Left colon (tissue), 2 donors: ENCODE measurements at regions of chr1 and their contacts with region 1.

Region 1: DNA sequence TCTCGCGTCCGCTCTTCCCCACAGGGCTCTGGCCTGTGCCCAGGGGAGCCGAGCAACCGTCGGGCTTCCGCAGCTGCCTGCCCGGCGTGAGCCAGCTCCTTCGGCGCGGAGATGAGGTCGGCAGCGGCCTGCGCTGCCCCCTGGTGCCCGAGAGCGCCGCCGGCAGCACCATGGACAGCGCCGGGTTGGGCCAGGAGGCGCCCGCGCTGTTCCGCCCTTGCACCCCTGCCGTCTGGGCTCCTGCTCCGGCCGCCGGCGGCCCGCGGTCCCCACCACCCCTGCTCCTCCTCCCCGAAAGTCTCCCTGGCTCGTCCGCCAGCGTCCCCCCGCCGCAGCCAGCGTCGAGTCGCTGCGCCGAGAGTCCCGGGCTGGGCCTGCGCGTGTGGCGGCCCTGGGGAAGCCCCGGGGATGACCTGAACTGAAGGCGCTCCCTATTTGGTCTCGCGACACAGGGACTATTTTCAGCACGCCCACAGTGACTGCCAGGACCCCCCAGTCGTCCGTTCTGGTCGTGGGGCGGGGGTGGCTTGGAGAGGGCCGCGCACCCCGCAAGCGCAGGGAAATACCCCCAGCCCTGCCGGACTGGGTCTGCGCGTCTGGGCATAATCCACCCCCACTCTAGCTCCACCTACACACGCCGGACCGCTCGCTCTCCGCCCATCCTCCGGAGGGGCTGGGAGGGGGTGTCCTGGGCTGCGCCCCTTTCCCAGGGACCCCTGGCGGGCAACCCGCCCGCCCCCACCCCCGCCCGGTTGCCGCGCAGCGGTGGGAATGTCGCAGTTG is 1.3 kb downstream of the HES3 start:
- DNase-seq: peak in 1 of 2 donors; percentile 87
- ATAC-seq: peak; percentile 70

Region 2: GRCh38 chr1:6129313-6129712 is 116.0 kb before region 1 on chr1:
- intact Hi-C with region 1: no loop called
- DNase-seq: peak in 1 of 2 donors; percentile 22
- ATAC-seq: peak; percentile 57

Region 3: GRCh38 chr1:6338695-6339094 is 93.4 kb after region 1 on chr1:
- intact Hi-C with region 1: loop called (anchors 2 to 5 kb)
- DNase-seq: no peak
- ATAC-seq: no peak

Region 4: DNA sequence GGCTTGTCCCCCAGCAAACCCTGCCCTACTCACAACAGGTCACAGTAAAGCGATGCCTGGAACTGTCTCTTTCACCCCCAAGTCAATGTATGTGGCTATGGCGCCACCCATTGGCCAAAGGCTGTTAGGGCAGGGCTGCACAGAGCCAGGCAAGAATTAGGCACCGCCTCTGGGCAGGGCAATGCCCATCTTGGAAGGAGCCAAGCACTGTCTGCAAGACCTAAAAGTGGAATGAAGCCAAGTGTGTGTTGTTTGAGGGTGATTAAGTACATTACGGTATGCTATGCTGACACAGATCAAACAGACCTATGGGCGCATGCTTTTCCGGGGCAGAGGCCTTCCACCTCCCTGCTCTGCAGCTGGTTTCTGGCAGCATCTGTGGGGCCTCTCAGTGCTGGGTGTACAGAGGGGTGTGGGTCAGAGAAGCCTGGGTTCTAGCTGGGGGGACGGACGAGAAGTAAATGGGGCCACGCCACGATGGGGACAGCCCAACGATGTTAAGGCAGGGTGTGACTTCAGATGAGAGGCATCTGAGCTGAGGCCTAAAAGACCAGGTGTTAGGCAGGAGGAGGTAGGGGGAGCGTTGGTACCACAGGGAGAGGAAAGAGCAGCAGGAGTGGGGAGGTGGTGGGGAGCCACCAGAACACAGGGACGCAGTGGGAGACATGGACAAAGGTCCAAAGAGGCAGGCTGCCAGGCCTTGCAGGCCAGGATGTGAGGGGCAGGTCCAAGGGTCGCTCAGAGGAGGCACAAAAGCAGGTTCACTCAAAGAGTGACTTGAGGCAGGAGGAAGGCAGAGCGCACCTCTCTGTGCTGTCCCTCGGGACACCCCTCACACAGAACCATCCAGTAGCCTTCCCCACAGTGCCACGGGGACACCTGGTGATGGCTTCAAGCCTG is 98.5 kb after region 1 on chr1:
- intact Hi-C with region 1: loop called (anchors 2 to 5 kb)
- DNase-seq: peak; percentile 83 to 86
- ATAC-seq: peak; percentile 83

Region 5: DNA sequence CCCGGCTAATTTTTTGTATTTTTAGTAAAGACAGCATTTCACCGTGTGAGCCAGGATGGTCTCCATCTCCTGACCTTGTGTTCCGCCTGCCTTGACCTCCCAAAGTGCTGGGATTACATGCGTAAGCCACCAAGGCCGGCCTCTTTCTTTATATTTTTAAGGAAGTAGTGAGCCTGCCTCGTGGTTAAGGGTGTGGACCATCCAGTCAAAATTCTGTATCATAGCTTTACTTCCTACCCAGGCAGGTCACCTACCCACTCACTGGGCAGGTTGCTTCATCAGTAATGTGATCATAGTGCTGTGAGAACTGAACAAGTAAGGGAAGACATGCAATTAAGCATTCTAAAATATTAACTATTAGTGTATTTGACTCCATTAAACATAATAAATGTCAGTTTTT is 156.4 kb after region 1 on chr1:
- intact Hi-C with region 1: loop called (anchors 10 kb)
- DNase-seq: no peak
- ATAC-seq: peak; percentile 48

Region 6: DNA sequence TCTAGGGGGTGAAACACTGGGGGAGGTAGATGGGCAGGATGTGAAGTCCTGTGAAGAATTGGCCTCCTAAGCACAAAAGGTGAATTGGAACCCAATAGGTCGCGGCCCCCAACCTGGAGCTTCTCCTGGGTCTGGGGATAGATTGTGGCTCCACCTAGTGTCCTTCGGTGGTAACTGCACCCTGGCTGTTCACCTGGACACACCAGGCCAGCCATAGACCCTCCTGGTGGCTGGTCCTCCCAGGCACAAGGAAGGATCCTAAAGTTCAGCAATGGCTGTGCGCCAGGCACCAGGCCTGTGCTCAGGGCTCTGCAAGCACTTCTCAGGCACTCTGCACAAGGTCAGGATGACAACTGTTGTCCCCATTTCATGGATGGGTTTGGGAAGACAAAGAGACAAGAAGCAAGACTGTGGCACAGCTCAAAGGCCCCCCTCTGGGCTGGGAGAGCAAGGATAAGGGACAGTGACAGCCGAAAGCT is 192.8 kb after region 1 on chr1:
- intact Hi-C with region 1: no loop called
- DNase-seq: peak in 1 of 2 donors; percentile 71
- ATAC-seq: peak; percentile 43

Region 7: DNA sequence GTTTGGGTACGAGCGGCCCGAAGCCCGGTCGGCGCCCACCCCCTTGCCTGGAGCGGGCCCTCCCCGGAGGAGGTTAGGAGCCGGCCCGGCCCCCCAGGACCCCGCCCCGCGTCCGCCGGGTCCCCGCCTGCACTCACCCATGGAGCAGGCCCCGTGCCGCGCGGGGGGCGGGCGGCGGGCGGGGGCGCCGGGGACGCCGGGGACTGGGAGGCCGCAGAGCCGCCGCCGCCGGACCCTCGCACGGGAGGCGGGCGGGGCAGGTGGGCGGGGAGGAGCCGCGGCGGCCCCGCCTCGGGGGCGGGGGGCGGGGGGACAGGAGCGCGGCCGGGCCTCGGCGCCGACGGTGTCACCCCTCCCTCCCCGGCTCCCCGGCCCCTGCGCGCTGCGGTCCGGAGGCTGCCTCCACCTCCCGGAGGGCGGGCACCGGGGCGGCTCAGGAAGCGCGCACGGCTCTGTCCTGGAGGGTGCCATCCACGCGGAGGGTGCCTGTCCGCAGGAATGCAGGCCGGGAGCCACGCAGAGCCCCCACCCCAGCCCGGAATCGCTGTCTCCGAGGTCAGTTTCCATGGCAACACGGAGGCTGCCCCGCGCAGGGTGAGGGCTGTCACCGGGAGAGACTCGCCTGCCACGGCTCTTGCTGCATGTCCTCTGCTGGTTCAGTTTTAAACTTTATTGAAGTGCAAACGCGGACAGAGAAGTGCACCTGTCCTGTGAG is 252.1 kb after region 1 on chr1:
- intact Hi-C with region 1: no loop called
- DNase-seq: peak in 1 of 2 donors; percentile 44
- ATAC-seq: peak; percentile 57